Spleen (tissue), 13 donors: ENCODE measurements at regions of chr7 and their contacts with region 1.

Region 1: GRCh38 chr7:95865716-95866371 is 93.5 kb downstream of the DYNC1I1 start:
- DNase-seq: no peak
- H3K4me3 ChIP-seq: no peak overlapping the region
- H3K27ac ChIP-seq: no peak overlapping the region
- H3K4me1 ChIP-seq: no peaks in the 10 kb centered on the region
- H3K27me3 ChIP-seq: no peaks in the 10 kb centered on the region
- CTCF ChIP-seq: no peak
- POLR2A ChIP-seq: no peak

Region 2: GRCh38 chr7:95723592-95724180 is 142.2 kb before region 1 on chr7:
- intact Hi-C with region 1: loop called (anchors 10 kb)
- DNase-seq: no peak
- H3K4me3 ChIP-seq: no peak overlapping the region
- H3K27ac ChIP-seq: no peak overlapping the region
- H3K4me1 ChIP-seq: no peaks in the 10 kb centered on the region
- H3K27me3 ChIP-seq: peaks cover 0 to 5% (median 0%) of the 10 kb centered on the region in 7 donors
- CTCF ChIP-seq: peak in 2 of 11 experiments; percentile 13 to 36
- POLR2A ChIP-seq: no peak

Region 3: GRCh38 chr7:95989301-95989700 is 123.5 kb after region 1 on chr7:
- intact Hi-C with region 1: no loop called
- DNase-seq: no peak
- H3K4me3 ChIP-seq: no peak overlapping the region
- H3K27ac ChIP-seq: no peak overlapping the region
- H3K4me1 ChIP-seq: no peaks in the 10 kb centered on the region
- H3K27me3 ChIP-seq: peaks cover 0 to 3% (median 0%) of the 10 kb centered on the region in 7 donors
- CTCF ChIP-seq: no peak
- POLR2A ChIP-seq: no peak